ENCODE measurements at regions of chr12 and their contacts with region 1.

Region 1: GRCh38 chr12:48618541-48618940 is 48.7 kb upstream of the LALBA start:
- DNase-seq: peak; percentile 27 to 82 (median 75)
- ATAC-seq: peak; percentile 97
- H3K4me3 ChIP-seq: no peak overlapping the region
- H3K4me3 Mint-ChIP-seq: no peak overlapping the region
- H3K27ac ChIP-seq: no peak overlapping the region
- H3K27ac Mint-ChIP-seq: no peak overlapping the region
- H3K4me1 ChIP-seq: no peaks in the 10 kb centered on the region
- H3K4me1 Mint-ChIP-seq: peaks cover 0 to 5% (median 0%) of the 10 kb centered on the region in 7 donors
- H3K27me3 ChIP-seq: no peaks in the 10 kb centered on the region
- H3K27me3 Mint-ChIP-seq: peaks cover 24 to 44% (median 29%) of the 10 kb centered on the region in 5 donors

Region 2: GRCh38 chr12:47651368-47652254 is 966.9 kb before region 1 on chr12:
- CTCF ChIA-PET with region 1: interaction called, 5 read pairs
- POLR2A ChIA-PET with region 1: no interaction called
- intact Hi-C with region 1: loop called in 1 of 2 experiments (anchors 1 kb)
- DNase-seq: peak in 8 of 9 donors; percentile 39 to 69 (median 56)
- ATAC-seq: peak; percentile 97
- H3K4me3 ChIP-seq: peak overlapping the region; percentile 38
- H3K4me3 Mint-ChIP-seq: peak overlapping the region; percentile 21 to 75 (median 44)
- H3K27ac ChIP-seq: peak overlapping the region; percentile 9
- H3K27ac Mint-ChIP-seq: peak overlapping the region in 8 of 9 donors; percentile 11 to 94 (median 64)
- H3K4me1 ChIP-seq: peaks cover 5 to 6% of the 10 kb centered on the region in 2 donors
- H3K4me1 Mint-ChIP-seq: peaks cover 8 to 21% (median 16%) of the 10 kb centered on the region in 7 donors
- H3K27me3 ChIP-seq: no peaks in the 10 kb centered on the region
- H3K27me3 Mint-ChIP-seq: no peaks in the 10 kb centered on the region

Region 3: GRCh38 chr12:48001505-48002413 is 616.8 kb before region 1 on chr12:
- CTCF ChIA-PET with region 1: no interaction called
- POLR2A ChIA-PET with region 1: no interaction called
- intact Hi-C with region 1: loop called in 1 of 2 experiments (anchors 10 kb)
- DNase-seq: peak in 3 of 9 donors; percentile 15 to 41 (median 18)
- ATAC-seq: peak; percentile 30
- H3K4me3 ChIP-seq: peak overlapping the region; percentile 15
- H3K4me3 Mint-ChIP-seq: peak overlapping the region; percentile 76 to 90 (median 80)
- H3K27ac ChIP-seq: no peak overlapping the region
- H3K27ac Mint-ChIP-seq: peak overlapping the region in 2 of 9 donors; percentile 21 to 72
- H3K4me1 ChIP-seq: peaks cover 34 to 45% of the 10 kb centered on the region in 2 donors
- H3K4me1 Mint-ChIP-seq: peaks cover 21 to 43% (median 39%) of the 10 kb centered on the region in 7 donors
- H3K27me3 ChIP-seq: peaks cover 25 to 44% of the 10 kb centered on the region in 2 donors
- H3K27me3 Mint-ChIP-seq: peaks cover 76 to 96% (median 83%) of the 10 kb centered on the region in 5 donors

Region 4: DNA sequence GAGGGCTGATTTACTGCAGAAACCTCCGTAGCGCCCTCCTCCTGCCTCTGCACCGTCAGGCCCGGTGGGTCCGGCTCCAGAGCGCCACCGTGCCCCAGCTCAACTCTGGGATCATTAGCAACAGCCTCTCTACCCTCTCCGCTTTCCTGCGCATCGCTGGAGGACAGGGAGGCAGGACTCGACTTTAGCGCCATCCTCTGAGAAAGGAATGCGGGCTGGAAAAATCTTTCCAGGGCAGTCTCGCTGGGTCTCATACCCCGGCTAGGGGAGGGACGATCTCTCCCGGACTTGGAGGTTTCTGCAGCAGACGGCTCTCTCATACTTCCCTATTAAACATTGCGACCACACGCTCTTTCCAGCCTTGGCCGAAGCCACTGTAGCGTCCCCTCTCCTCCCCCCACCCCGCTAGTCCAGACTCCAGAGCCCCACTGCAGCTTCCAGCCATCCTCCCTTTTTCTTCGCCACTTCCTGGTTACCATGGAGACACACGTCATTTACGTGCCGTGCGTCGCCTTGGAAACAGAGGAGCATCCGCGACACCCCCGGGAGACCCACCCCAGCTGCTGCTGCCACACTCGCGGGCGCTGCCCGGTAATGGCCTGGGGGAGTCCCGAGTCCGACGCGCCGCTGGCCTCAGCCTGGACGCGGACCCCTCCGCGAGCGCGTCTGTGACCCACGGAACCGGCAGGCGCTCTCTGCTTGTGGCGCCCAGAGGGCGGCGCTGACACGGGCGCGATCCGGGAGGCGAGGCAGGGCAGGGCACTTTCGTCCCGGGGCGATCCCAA is 435.3 kb before region 1 on chr12 and contains the start of gene CCDC184:
- CTCF ChIA-PET with region 1: interaction called, 3 read pairs
- POLR2A ChIA-PET with region 1: no interaction called
- intact Hi-C with region 1: loop called in 1 of 2 experiments (anchors 2 kb)
- DNase-seq: peak; percentile 58 to 85 (median 83)
- ATAC-seq: peak; percentile 84
- H3K4me3 ChIP-seq: peak within 1 kb of the TSS; percentile 80
- H3K4me3 Mint-ChIP-seq: peak within 1 kb of the TSS; percentile 91 to 98 (median 96)
- H3K27ac ChIP-seq: peak within 1 kb of the TSS; percentile 59
- H3K27ac Mint-ChIP-seq: peak within 1 kb of the TSS; percentile 60 to 95 (median 86)
- H3K4me1 ChIP-seq: peaks cover 6 to 11% of the 10 kb centered on the region in 2 donors
- H3K4me1 Mint-ChIP-seq: peaks cover 5 to 28% (median 8%) of the 10 kb centered on the region in 7 donors
- H3K27me3 ChIP-seq: peaks cover 0 to 4% of the 10 kb centered on the region in 2 donors
- H3K27me3 Mint-ChIP-seq: peaks cover 21 to 81% (median 38%) of the 10 kb centered on the region in 5 donors
- total RNA-seq, gene CCDC184: 0.22 to 3.8 (median 1.8) TPM in 4 of 5 experiments, not detected in the other

Region 5: DNA sequence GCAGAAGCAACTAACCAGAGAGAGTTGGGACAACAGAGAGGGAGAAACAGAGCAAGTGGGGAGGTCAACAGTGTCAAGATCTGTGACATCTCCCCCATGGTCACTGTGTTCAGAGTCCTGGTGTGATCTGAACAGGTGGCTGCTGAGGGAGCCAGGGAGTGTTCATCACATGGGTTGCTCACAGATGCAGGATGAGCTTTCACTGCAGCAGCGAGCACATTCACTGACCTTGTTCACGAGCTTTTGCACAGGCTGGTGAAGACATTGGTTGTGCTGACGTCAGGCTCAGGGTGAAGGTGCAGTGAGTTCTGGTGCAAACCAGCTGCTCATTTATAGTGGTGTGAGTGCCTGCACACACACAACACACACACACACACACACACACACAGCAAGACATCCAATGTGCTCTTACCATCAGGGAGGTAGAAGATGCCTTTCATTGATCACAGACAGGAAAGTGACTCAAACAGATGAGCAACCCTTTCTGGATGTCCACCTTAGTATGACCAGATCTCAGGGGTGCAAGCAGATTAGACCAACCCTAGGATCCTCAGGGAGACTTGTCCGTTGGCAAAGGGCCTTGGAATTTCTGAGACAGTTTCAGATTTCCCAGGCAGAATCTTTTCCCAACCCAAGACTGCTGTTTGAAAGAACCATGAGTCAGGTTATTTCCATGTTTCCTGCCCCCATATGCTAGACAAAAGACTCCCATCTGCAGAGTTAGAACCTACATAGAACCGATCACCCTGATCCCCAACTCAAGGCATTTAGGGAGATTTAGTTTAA is 371.2 kb before region 1 on chr12:
- CTCF ChIA-PET with region 1: no interaction called
- POLR2A ChIA-PET with region 1: no interaction called
- intact Hi-C with region 1: loop called in 1 of 2 experiments (anchors 1 kb)
- DNase-seq: no peak
- ATAC-seq: no peak
- H3K4me3 ChIP-seq: no peak overlapping the region
- H3K4me3 Mint-ChIP-seq: no peak overlapping the region
- H3K27ac ChIP-seq: no peak overlapping the region
- H3K27ac Mint-ChIP-seq: no peak overlapping the region
- H3K4me1 ChIP-seq: no peaks in the 10 kb centered on the region
- H3K4me1 Mint-ChIP-seq: no peaks in the 10 kb centered on the region
- H3K27me3 ChIP-seq: peaks cover 0 to 4% of the 10 kb centered on the region in 2 donors
- H3K27me3 Mint-ChIP-seq: peaks cover 0 to 33% (median 25%) of the 10 kb centered on the region in 5 donors

Region 6: GRCh38 chr12:48542300-48542928 is 76.1 kb before region 1 on chr12:
- CTCF ChIA-PET with region 1: interaction called, 49 read pairs
- POLR2A ChIA-PET with region 1: no interaction called
- intact Hi-C with region 1: loop called (anchors 1 kb)
- DNase-seq: peak in 8 of 9 donors; percentile 22 to 45 (median 34)
- ATAC-seq: peak; percentile 47
- H3K4me3 ChIP-seq: no peak overlapping the region
- H3K4me3 Mint-ChIP-seq: no peak overlapping the region
- H3K27ac ChIP-seq: no peak overlapping the region
- H3K27ac Mint-ChIP-seq: no peak overlapping the region
- H3K4me1 ChIP-seq: no peaks in the 10 kb centered on the region
- H3K4me1 Mint-ChIP-seq: peaks cover 0 to 4% (median 0%) of the 10 kb centered on the region in 7 donors
- H3K27me3 ChIP-seq: no peaks in the 10 kb centered on the region
- H3K27me3 Mint-ChIP-seq: peaks cover 0 to 6% (median 3%) of the 10 kb centered on the region in 5 donors

Measured in naive thymus-derived CD4-positive, alpha-beta T cell (primary cell).